ENCODE measurements at regions of chr10 and their contacts with region 1.

Region 1: DNA sequence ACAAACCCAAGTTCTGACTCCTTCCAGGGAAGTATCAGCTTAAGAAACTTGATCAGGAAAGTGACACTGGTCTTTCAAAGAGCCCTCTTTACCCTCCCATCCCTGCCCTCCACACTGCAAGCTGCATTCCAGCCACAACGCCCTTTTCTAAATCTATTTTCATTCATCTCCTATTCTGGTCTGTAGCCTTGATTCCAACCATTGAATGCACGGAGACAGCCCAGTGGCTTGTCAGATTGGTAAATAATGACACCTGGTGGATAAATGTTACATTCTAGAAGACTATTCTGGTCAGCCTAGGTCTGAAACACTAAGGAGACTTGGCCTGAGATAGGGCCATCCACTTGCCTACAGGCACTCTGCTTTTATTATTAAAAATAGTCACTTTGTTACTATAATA is 20.9 kb downstream of the MORN4 start:
- DNase-seq: peak; percentile 17
- H3K4me3 Mint-ChIP-seq: no peak overlapping the region
- H3K27ac Mint-ChIP-seq: no peak overlapping the region
- H3K4me1 Mint-ChIP-seq: no peaks in the 10 kb centered on the region
- H3K27me3 Mint-ChIP-seq: no peaks in the 10 kb centered on the region
- CTCF ChIP-seq: no peak

Region 2: GRCh38 chr10:97463363-97464132 is 148.8 kb before region 1 on chr10:
- CTCF ChIA-PET with region 1: interaction called, 4 read pairs
- intact Hi-C with region 1: loop called (anchors 1 kb)
- DNase-seq: peak; percentile 59
- H3K4me3 Mint-ChIP-seq: no peak overlapping the region
- H3K27ac Mint-ChIP-seq: no peak overlapping the region
- H3K4me1 Mint-ChIP-seq: no peaks in the 10 kb centered on the region
- H3K27me3 Mint-ChIP-seq: no peaks in the 10 kb centered on the region
- CTCF ChIP-seq: peak; percentile 79

Region 3: GRCh38 chr10:97534746-97535367 is 77.5 kb before region 1 on chr10:
- CTCF ChIA-PET with region 1: interaction called, 5 read pairs
- intact Hi-C with region 1: loop called (anchors 2 kb)
- DNase-seq: peak; percentile 46
- H3K4me3 Mint-ChIP-seq: no peak overlapping the region
- H3K27ac Mint-ChIP-seq: no peak overlapping the region
- H3K4me1 Mint-ChIP-seq: no peaks in the 10 kb centered on the region
- H3K27me3 Mint-ChIP-seq: no peaks in the 10 kb centered on the region
- CTCF ChIP-seq: no peak

Region 4: DNA sequence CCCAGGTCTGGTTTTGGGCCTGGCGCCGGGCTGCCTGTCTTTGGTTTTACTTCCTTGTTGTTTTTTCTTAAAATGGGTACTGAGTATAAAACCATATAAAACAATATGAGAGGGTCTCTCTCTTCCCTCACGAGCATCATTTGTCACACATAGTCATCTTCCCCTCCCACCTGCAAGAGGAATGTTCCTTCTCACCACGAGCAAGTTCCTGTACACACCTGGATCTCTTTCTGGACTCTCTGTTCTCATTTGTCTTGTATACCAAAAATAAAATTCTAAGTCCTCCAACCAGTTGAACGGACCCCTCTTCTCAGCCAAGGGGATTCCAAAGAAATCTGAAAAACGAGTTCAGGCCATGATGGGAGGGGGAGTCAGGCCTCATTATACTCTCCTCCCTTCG is 50.7 kb before region 1 on chr10:
- CTCF ChIA-PET with region 1: no interaction called
- intact Hi-C with region 1: no loop called
- DNase-seq: no peak
- H3K4me3 Mint-ChIP-seq: no peak overlapping the region
- H3K27ac Mint-ChIP-seq: no peak overlapping the region
- H3K4me1 Mint-ChIP-seq: peaks cover 7% of the 10 kb centered on the region
- H3K27me3 Mint-ChIP-seq: no peaks in the 10 kb centered on the region
- CTCF ChIP-seq: no peak

Region 5: DNA sequence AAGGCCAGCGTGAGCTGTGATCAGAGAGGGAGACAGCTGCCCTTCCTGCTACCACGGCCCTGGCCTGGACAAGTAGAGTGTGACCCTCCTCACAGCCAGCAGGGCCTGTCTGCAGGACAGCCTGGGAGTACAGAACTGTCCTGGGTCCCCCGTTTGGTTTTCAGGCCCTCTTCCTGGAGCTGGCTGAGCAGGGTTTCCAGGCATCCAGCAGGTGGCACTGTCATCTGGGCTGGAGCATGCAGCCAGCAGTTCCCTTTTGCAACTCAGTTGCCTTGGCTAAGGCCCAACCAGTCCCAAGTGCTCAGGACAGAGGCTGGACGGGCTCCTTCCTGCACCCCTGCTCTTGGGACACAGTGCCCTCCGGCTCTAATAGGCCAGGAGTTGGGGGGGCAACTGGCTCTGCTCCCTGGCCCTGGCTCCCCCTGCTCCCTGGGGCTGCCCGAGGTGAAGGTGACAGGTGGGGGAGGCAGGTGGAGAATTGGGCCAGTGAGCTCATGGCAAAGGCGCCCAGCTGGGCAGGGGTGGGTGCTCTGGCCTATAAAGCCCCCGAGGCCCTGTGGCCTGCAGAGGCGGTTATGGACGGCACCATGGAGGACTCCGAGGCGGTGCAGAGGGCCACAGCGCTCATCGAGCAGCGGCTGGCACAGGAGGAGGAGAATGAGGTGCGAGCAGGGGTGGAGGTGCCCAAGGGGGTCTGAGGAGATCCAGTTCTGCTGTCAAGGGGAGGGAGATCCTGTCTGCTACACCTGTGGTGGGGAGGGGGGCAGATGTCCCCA is 40.0 kb before region 1 on chr10 and contains the start of gene ANKRD2:
- CTCF ChIA-PET with region 1: interaction called, 7 read pairs
- intact Hi-C with region 1: loop called (anchors 1 kb)
- DNase-seq: peak; percentile 81
- H3K4me3 Mint-ChIP-seq: peak within 1 kb of the TSS; percentile 28
- H3K27ac Mint-ChIP-seq: peak within 1 kb of the TSS; percentile 64
- H3K4me1 Mint-ChIP-seq: peaks cover 45% of the 10 kb centered on the region
- H3K27me3 Mint-ChIP-seq: no peaks in the 10 kb centered on the region
- CTCF ChIP-seq: peak; percentile 34
- total RNA-seq, gene ANKRD2: 0.47 and 0.90 TPM in 2 replicates

Measured in Calu3 (cell line).